ENCODE measurements at regions of chr1 and their contacts with region 1.

Region 1: GRCh38 chr1:233944601-233945000 is 40.1 kb downstream of the SLC35F3 start:
- DNase-seq: no peak
- H3K4me3 ChIP-seq: no peak overlapping the region
- H3K27ac ChIP-seq: no peak overlapping the region
- H3K4me1 ChIP-seq: no peaks in the 10 kb centered on the region; a peak in 1 of 7 replicates
- H3K27me3 ChIP-seq: no peaks in the 10 kb centered on the region
- CTCF ChIP-seq: no peak
- EP300 ChIP-seq: no peak
- POLR2A ChIP-seq: no peak
- RAD21 ChIP-seq: no peak

Region 2: DNA sequence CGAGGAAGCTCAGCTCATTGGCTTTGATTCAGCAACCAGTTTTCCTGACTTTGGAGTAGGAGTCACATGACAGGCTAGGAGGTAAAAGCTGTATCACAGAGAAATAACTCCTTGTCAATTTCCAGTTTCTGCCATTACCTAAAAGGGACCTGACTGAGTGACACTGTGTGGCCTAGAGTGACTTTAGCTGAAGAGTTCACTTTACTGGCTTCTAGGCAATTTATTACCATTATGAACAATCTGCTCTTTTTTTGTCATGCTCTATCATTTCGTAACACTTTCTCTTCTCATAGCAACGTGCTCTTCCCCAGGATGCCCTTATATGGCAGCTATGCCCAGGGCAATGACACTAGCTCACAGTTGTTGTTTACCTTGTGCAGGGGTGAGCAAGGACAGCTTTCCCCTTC is 223.5 kb before region 1 on chr1:
- CTCF ChIA-PET with region 1: no interaction called
- POLR2A ChIA-PET with region 1: no interaction called
- DNase-seq: no peak
- H3K4me3 ChIP-seq: no peak overlapping the region
- H3K27ac ChIP-seq: no peak overlapping the region
- H3K4me1 ChIP-seq: peaks cover under 1 to 6% (median 1%) of the 10 kb centered on the region in 4 experiments; a peak in 2 of 7 replicates
- H3K27me3 ChIP-seq: 0 out of 7 replicates have a peak, but pooled peaks cover 0 to 2% (median 0%) of the 10 kb centered on the region in 4 experiments
- CTCF ChIP-seq: no peak
- EP300 ChIP-seq: no peak
- POLR2A ChIP-seq: no peak
- RAD21 ChIP-seq: no peak

Region 3: GRCh38 chr1:233916706-233917105 is 27.9 kb before region 1 on chr1:
- CTCF ChIA-PET with region 1: no interaction called
- POLR2A ChIA-PET with region 1: no interaction called
- DNase-seq: no peak
- H3K4me3 ChIP-seq: no peak overlapping the region
- H3K27ac ChIP-seq: no peak overlapping the region
- H3K4me1 ChIP-seq: peaks cover 0 to 3% (median 0%) of the 10 kb centered on the region in 4 experiments; a peak in 1 of 7 replicates
- H3K27me3 ChIP-seq: no peaks in the 10 kb centered on the region
- CTCF ChIP-seq: no peak
- EP300 ChIP-seq: no peak
- POLR2A ChIP-seq: no peak
- RAD21 ChIP-seq: no peak

Region 4: GRCh38 chr1:233960386-233960785 is 15.8 kb after region 1 on chr1:
- CTCF ChIA-PET with region 1: interaction called, 18 read pairs
- POLR2A ChIA-PET with region 1: no interaction called
- DNase-seq: no peak
- H3K4me3 ChIP-seq: no peak overlapping the region
- H3K27ac ChIP-seq: no peak overlapping the region
- H3K4me1 ChIP-seq: peaks cover 0 to 2% (median under 1%) of the 10 kb centered on the region in 4 experiments; a peak in 2 of 7 replicates
- H3K27me3 ChIP-seq: no peaks in the 10 kb centered on the region
- CTCF ChIP-seq: no peak
- EP300 ChIP-seq: no peak
- POLR2A ChIP-seq: no peak
- RAD21 ChIP-seq: no peak

Region 5: DNA sequence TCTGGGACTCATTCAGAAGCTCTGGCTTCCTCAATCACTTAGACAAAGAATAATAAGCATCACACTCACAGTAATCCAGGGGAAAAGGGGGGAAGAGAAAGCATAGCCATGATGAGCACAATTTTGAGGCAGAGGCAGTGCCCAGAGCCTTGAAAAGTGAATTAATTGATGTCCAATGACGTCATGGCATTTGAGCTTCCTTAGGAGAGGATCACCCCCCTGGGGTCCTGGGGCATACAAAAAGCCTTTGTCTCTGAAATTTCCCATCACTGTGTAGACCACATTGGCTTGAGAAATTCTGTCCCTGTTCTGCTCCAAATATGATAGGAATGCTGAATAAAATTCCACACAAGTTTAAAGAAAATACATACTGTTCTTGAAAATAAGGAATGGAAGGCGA is 344.3 kb after region 1 on chr1:
- CTCF ChIA-PET with region 1: no interaction called
- POLR2A ChIA-PET with region 1: no interaction called
- DNase-seq: no peak
- H3K4me3 ChIP-seq: no peak overlapping the region
- H3K27ac ChIP-seq: no peak overlapping the region
- H3K4me1 ChIP-seq: no peaks in the 10 kb centered on the region
- H3K27me3 ChIP-seq: no peaks in the 10 kb centered on the region
- CTCF ChIP-seq: no peak
- EP300 ChIP-seq: no peak
- POLR2A ChIP-seq: no peak
- RAD21 ChIP-seq: no peak

Measured in H1 (cell line).